A673 (cell line): ENCODE measurements at regions of chr4 and their contacts with region 1.

Region 1: DNA sequence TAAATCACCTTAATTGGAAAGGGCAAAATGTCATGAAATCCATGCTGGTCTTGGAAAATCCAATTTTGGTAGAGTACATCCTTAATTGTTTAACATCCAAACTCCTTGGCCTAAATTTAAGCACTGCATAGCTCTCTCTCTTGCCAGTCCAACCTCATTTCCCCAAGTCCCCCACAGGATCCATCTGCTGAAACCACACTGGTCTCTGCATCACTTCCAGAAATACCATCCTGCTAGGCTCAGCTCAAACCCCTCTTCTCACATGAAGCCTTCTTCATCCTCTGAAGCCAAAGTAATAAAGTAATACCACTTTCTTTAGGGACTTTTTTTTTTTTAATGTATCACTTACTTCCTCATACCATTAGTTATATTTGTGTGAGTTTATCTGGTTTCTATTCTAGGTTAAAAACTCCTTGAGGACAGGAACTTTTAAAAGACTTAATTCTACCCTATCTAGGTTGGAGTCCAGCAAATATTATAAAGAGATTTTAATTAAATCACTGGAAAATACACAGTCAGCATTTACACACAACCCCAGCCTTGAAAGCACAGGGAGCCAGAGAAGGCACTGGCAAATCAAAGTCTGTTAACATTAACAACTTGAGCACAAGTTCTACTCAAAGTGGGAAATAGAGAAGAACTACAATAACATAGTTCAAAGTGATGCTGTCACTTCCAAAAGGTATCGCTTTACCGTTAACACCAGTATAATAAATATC is 16.7 kb upstream of the KLF3 start:
- DNase-seq: no peak
- H3K4me3 ChIP-seq: no peak overlapping the region
- H3K27ac ChIP-seq: no peak overlapping the region
- H3K4me1 ChIP-seq: no peaks in the 10 kb centered on the region
- H3K27me3 ChIP-seq: no peaks in the 10 kb centered on the region
- CTCF ChIP-seq: no peak

Region 2: GRCh38 chr4:38663801-38664705 is 16.8 kb after region 1 on chr4 and contains the start of gene KLF3:
- CTCF ChIA-PET with region 1: no interaction called
- POLR2A ChIA-PET with region 1: interaction called, 11 read pairs
- intact Hi-C with region 1: no loop called
- DNase-seq: peak; percentile 86
- H3K4me3 ChIP-seq: peak within 1 kb of the TSS; percentile 96
- H3K27ac ChIP-seq: peak within 1 kb of the TSS; percentile 98
- H3K4me1 ChIP-seq: peaks cover 26% of the 10 kb centered on the region
- H3K27me3 ChIP-seq: no peaks in the 10 kb centered on the region
- CTCF ChIP-seq: no peak
- total RNA-seq, gene KLF3: 36.1 and 38.4 TPM in 2 replicates